IMR-90 (cell line): ENCODE measurements at regions of chr18 and their contacts with region 1.

Region 1: DNA sequence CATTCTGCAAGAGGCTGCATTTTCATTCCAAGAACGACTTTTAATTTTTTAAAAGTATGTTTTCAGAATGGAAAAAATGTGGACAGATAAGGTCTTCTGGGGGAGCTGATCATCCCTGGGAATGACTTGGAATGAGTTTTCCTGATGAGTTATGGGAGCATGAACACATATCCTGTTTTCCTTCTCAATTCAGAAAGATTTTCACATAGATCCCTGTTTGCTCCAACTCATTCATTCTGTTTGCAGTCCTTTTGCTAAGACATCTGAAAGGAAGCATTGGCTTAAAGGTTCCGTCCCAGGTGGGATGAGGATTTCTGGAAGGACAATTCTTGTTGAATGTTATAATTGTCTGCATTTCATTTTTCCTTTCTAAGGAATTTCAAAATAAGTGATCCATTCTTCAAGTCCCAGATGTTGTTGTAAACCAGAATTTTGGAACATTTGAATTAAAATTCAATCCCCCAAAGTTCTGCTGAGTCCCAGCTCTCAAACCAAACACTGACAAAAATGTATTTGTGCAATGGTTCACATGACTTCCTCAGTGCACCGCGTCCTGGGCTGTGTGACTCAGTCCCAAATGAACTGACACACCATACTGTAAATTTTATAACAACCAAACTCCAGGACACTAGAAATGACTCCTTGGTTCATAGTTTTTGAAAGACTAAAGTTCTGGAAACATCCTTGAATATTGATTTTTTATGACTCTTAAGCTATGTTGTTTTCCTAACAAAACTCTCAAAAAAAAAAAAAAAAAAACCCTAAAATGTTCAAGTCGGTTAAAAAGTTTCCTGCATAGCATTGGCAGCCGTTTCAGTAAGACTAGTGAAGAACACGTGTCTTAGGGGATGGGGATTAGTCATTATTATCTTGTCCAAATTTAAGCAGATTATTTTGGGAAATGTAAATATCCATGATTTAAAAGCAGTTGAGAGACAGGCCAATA is 281.8 kb upstream of the TCF4 start:
- DNase-seq: peak; percentile 61
- ATAC-seq: peak; percentile 73
- H3K4me3 ChIP-seq: no peak overlapping the region
- H3K27ac ChIP-seq: no peak overlapping the region
- H3K4me1 ChIP-seq: peaks cover 9% of the 10 kb centered on the region; the same call in 1 of the 2 replicates
- H3K27me3 ChIP-seq: no peaks in the 10 kb centered on the region
- CTCF ChIP-seq: no peak
- POLR2A ChIP-seq: no peak
- RAD21 ChIP-seq: no peak

Region 2: GRCh38 chr18:55920063-55920462 is 50.2 kb after region 1 on chr18:
- CTCF ChIA-PET with region 1: no interaction called
- POLR2A ChIA-PET with region 1: no interaction called
- dilution Hi-C with region 1: no loop called
- in situ Hi-C with region 1: loop called (anchors 5 kb)
- intact Hi-C with region 1: no loop called
- DNase-seq: no peak
- ATAC-seq: no peak
- H3K4me3 ChIP-seq: no peak overlapping the region
- H3K27ac ChIP-seq: no peak overlapping the region
- H3K4me1 ChIP-seq: peaks cover 2% of the 10 kb centered on the region; the same call in 1 of the 2 replicates
- H3K27me3 ChIP-seq: no peaks in the 10 kb centered on the region
- CTCF ChIP-seq: no peak
- POLR2A ChIP-seq: no peak
- RAD21 ChIP-seq: no peak

Region 3: DNA sequence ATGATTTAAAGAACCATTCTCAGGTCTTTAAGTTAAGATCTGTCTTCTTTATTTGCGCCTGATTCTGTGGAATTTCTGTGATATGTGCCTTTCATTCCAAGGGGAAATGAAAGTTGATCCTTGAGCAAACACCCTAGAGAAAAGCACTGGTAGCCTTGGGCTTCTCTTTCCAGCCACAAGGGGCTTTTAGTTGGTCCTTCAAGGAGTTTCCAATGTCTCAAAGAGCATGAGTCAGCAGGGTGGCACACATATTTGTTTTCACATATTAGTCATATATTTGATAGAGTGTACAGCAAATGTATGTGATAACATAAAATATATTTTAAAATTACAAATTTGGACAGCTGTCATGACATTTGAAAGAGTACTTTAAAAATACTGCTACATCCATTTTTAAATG is 429.1 kb after region 1 on chr18:
- CTCF ChIA-PET with region 1: no interaction called
- POLR2A ChIA-PET with region 1: no interaction called
- dilution Hi-C with region 1: no loop called
- in situ Hi-C with region 1: no loop called
- intact Hi-C with region 1: loop called (anchors 5 kb)
- DNase-seq: peak; percentile 62
- ATAC-seq: no peak; the same call in 1 of the 2 replicates
- H3K4me3 ChIP-seq: no peak overlapping the region
- H3K27ac ChIP-seq: no peak overlapping the region
- H3K4me1 ChIP-seq: no peaks in the 10 kb centered on the region
- H3K27me3 ChIP-seq: no peaks in the 10 kb centered on the region
- CTCF ChIP-seq: peak; percentile 42
- POLR2A ChIP-seq: no peak
- RAD21 ChIP-seq: peak; percentile 43; the same call in 1 of the 2 replicates